Mammary epithelial cell (primary cell): ENCODE measurements at regions of chr11 and their contacts with region 1.

Region 1: GRCh38 chr11:108121274-108122155 is at the start of gene ACAT1:
- DNase-seq: peak; percentile 89
- H3K4me3 ChIP-seq: peak within 1 kb of the TSS; percentile 76 to 96 (median 96)
- H3K27ac ChIP-seq: peak within 1 kb of the TSS; percentile 72
- H3K4me1 ChIP-seq: peaks cover 12% of the 10 kb centered on the region
- H3K27me3 ChIP-seq: no peaks in the 10 kb centered on the region
- CTCF ChIP-seq: peak in 1 of 2 donors; percentile 21
- total RNA-seq, gene ACAT1: 35.0 to 35.6 TPM

Region 2: DNA sequence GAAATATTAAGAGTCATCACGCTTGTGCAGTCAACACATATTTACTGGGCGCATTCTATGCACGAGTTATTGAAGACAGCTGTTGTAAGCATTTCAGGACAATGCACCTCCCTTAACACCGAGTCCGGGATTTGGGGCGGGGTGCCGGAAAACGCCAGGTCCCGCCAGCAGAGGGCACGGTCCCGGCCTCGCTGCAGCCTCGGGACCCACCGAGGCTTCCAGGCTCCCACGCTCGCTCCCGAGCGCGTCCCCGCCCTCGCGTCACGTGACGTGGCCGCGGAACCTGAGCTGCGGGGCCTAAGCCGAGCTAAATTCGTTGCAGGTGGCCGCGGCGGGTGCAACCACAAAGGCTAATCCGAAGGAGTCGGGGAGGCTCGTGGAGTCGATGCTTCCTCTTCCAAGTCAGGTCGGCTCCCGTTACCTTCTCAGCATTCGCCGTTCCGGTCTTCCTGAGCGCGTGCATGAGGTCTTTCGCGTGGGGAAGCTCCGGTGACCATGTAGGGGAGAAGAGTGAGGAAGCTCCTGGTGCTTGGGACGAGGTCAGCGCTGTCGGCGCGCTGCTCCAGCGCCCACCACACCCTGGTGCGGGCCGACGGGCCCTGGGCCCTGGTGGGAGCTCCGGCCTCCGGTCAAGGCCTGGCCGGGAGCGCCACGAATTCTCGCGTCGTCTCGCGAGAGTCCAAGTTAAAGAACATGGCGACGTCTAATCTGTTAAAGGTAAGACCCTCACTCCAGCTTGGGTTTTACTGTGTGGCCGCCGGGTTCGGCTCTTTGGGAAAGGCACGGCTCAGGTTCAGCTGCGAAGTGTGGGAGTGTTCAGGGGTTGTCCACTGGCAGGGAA is 112.6 kb before region 1 on chr11 and contains the start of gene CUL5:
- CTCF ChIA-PET with region 1: no interaction called
- dilution Hi-C with region 1: no loop called
- in situ Hi-C with region 1: no loop called
- intact Hi-C with region 1: loop called (anchors 5 kb)
- DNase-seq: peak; percentile 86
- H3K4me3 ChIP-seq: peak within 1 kb of the TSS; percentile 62 to 97 (median 69)
- H3K27ac ChIP-seq: peak within 1 kb of the TSS; percentile 88
- H3K4me1 ChIP-seq: peaks cover 14% of the 10 kb centered on the region
- H3K27me3 ChIP-seq: no peaks in the 10 kb centered on the region
- CTCF ChIP-seq: peak; percentile 75 to 94
- total RNA-seq, gene CUL5: 29.8 to 36.7 TPM

Region 3: DNA sequence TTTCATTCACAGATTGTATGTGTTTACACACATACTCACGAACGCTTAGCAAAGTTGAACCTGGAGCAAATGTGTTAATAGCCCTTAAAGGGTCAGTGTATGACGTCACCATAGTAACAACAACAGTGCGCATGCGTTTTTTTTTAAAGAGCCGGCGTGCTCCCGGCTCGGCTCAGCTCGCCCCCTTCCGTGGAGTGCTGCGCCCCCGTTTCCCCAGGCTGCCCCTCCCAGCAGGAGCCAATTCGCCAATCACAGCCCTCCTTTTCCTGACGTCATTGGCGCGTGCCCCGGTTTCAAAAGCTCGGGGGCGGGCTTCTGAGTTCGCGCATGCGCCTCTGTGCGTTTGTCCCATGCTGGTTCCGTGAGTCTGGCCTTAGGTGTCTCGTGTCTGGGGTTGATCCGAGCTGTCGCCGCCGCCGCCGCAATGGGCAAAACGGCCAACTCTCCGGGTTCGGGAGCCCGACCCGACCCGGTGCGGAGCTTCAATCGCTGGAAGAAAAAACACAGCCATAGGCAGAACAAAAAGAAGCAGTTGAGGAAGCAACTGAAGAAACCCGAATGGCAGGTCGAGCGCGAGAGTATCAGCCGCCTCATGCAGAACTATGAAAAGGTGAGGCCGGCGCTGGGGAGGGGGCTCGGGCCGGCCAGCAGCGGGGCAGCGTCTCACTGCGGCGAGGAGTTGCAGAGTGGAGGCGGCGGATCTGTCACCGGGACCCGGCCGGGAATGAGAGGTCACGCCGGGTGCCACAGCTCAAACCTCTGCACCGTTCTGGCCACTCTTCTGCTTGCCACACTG is 543.4 kb after region 1 on chr11 and contains the start of gene DDX10:
- CTCF ChIA-PET with region 1: no interaction called
- dilution Hi-C with region 1: no loop called
- in situ Hi-C with region 1: loop called in 1 of 2 experiments (anchors 25 kb)
- intact Hi-C with region 1: no loop called
- DNase-seq: peak; percentile 97
- H3K4me3 ChIP-seq: peak within 1 kb of the TSS; percentile 74 to 90 (median 76)
- H3K27ac ChIP-seq: peak within 1 kb of the TSS; percentile 52
- H3K4me1 ChIP-seq: peaks cover 11% of the 10 kb centered on the region
- H3K27me3 ChIP-seq: no peaks in the 10 kb centered on the region
- CTCF ChIP-seq: peak; percentile 7 to 39
- total RNA-seq, gene DDX10: 12.8 to 32.1 TPM